ENCODE measurements at regions of chr17 and their contacts with region 1.

Region 1: GRCh38 chr17:49230636-49231562 is at the start of gene PHOSPHO1:
- DNase-seq: peak; percentile 85
- H3K4me3 ChIP-seq: peak within 1 kb of the TSS; percentile 42 to 60 (median 49)
- H3K27ac ChIP-seq: no peak within 1 kb of the TSS
- H3K4me1 ChIP-seq: peaks cover 10% of the 10 kb centered on the region
- H3K27me3 ChIP-seq: peaks cover 0 to 4% of the 10 kb centered on the region in 2 experiments
- CTCF ChIP-seq: no peak
- POLR2A ChIP-seq: no peak
- total RNA-seq, gene PHOSPHO1: 0.18 TPM in 1 of 2 replicates, not detected in the other

Region 2: DNA sequence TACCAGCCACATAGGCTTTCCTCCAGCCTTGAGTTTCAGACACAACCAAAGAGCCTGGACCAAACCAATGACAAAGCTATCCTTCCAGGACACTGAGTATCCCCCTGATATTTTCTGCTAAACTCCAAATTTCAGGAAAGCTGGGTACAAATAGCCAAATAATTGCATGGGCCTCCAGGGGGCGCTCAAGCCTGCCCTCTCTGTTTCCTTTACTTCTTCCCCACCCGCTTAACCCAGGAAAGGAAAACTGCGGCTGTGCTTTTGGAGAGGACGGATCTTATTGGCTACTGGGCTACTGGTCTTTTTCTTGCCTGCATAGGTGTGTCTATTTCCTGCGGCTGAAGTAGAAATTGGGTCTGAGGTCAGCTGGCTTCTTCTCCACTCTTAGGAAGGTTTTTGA is 50.6 kb before region 1 on chr17:
- CTCF ChIA-PET with region 1: interaction called, 103 read pairs
- POLR2A ChIA-PET with region 1: no interaction called
- dilution Hi-C with region 1: no loop called
- intact Hi-C with region 1: loop called (anchors 1 kb)
- DNase-seq: peak; percentile 63
- H3K4me3 ChIP-seq: no peak overlapping the region
- H3K27ac ChIP-seq: no peak overlapping the region
- H3K4me1 ChIP-seq: no peaks in the 10 kb centered on the region
- H3K27me3 ChIP-seq: no peaks in the 10 kb centered on the region
- CTCF ChIP-seq: peak; percentile 90 to 96
- POLR2A ChIP-seq: no peak

Region 3: GRCh38 chr17:49210158-49211029 is 20.5 kb before region 1 on chr17 and contains the starts of genes ABI3 and GNGT2:
- CTCF ChIA-PET with region 1: interaction called, 24 read pairs
- POLR2A ChIA-PET with region 1: no interaction called
- dilution Hi-C with region 1: no loop called
- intact Hi-C with region 1: no loop called
- DNase-seq: peak; percentile 87
- H3K4me3 ChIP-seq: peak within 1 kb of the TSS; percentile 47 to 74 (median 59)
- H3K27ac ChIP-seq: peak within 1 kb of the TSS; percentile 73
- H3K4me1 ChIP-seq: peaks cover 62% of the 10 kb centered on the region
- H3K27me3 ChIP-seq: no peaks in the 10 kb centered on the region
- CTCF ChIP-seq: no peak
- POLR2A ChIP-seq: peak; percentile 64
- total RNA-seq, gene ABI3: 35.2 and 35.7 TPM in 2 replicates
- total RNA-seq, gene GNGT2: 3.7 and 3.8 TPM in 2 replicates

Region 4: DNA sequence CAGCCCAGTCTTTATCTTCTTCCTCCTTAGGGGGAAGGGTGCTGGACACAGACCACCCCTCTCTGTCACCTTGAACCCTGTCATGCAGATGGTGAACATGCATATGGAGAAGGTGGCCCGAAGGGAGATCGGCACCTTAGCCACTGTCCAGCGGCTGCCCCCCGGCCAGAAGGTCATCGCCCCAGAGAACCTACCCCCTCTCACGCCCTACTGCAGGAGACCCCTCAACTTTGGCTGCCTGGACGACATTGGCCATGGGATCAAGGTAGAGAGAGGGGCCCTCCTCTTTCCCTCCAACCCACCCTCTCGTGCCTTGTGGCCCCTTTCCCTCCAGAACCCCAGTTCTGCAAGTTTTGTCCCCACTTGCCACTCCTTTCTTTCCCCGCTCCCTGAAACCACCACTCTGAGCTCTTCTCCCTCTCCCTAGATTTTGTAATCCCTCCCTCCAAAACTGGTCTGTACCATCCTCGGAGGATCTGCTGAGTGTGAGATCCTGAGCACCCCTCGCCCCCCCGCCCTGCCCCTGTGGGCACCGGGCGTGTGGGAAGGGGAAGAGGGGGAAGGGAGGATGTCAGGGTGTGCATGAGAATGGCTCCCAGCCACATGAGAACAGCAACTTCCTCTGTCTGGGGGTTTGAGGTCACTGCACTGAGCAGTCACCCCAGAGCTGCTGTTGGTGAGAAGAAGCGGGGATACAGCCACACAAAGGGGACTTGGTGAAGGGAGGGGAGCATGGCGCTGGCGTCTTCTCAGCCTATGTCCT is 13.1 kb before region 1 on chr17:
- CTCF ChIA-PET with region 1: interaction called, 24 read pairs
- POLR2A ChIA-PET with region 1: no interaction called
- dilution Hi-C with region 1: no loop called
- intact Hi-C with region 1: no loop called
- DNase-seq: no peak
- H3K4me3 ChIP-seq: no peak overlapping the region
- H3K27ac ChIP-seq: no peak overlapping the region
- H3K4me1 ChIP-seq: peaks cover 32% of the 10 kb centered on the region
- H3K27me3 ChIP-seq: no peaks in the 10 kb centered on the region
- CTCF ChIP-seq: no peak
- POLR2A ChIP-seq: no peak

Region 5: GRCh38 chr17:49260011-49260921 is 29.4 kb after region 1 on chr17:
- CTCF ChIA-PET with region 1: interaction called, 8 read pairs
- POLR2A ChIA-PET with region 1: no interaction called
- dilution Hi-C with region 1: no loop called
- intact Hi-C with region 1: loop called (anchors 2 kb)
- DNase-seq: peak; percentile 87
- H3K4me3 ChIP-seq: peak overlapping the region; percentile 43 to 51 (median 51)
- H3K27ac ChIP-seq: peak overlapping the region; percentile 85
- H3K4me1 ChIP-seq: peaks cover 14% of the 10 kb centered on the region
- H3K27me3 ChIP-seq: no peaks in the 10 kb centered on the region
- CTCF ChIP-seq: no peak
- POLR2A ChIP-seq: peak; percentile 76

Region 6: DNA sequence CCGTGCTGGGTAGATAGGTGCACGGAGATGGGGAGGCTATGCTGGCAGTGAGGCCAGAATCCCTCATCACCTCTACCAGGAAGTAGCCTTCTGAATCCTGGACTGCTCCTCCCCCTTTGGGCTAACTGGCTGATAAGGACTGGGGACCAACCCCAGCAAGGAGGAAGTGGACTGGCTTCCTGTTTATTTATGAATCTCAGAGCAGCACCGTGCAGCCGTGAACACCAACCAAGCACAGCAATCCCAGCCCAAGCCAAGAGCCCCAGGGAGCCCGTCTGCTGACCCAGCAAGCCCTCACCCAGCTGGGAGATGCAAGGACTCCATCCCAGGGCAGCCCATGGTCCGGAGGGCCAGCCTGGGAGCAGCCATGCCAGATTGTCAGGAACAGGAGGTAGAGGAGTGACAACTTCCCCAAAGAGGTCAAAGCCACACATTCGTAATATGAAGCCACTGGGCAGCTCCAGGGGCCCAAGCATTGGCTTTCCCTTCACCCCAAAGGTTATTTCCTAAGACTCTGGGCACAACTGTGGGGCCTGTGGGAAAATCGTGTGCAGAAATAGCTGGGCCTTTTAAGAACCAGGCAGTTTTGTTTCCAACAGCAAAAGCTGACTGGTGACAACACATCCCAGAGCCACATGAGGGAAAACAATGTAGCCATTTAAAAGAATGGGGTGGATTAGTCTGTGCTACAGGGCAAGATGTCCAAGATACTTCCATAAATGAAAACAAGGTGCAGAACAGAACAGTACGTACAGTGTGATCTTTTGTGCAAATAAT is 159.8 kb after region 1 on chr17:
- CTCF ChIA-PET with region 1: no interaction called
- POLR2A ChIA-PET with region 1: no interaction called
- dilution Hi-C with region 1: no loop called
- intact Hi-C with region 1: loop called (anchors 2 kb)
- DNase-seq: peak; percentile 29
- H3K4me3 ChIP-seq: no peak overlapping the region
- H3K27ac ChIP-seq: peak overlapping the region; percentile 33
- H3K4me1 ChIP-seq: peaks cover 19% of the 10 kb centered on the region
- H3K27me3 ChIP-seq: no peaks in the 10 kb centered on the region
- CTCF ChIP-seq: no peak
- POLR2A ChIP-seq: no peak

Measured in endothelial cell of umbilical vein (primary cell).